HCT116 (cell line): ENCODE measurements at regions of chr1 and their contacts with region 1.

Region 1: GRCh38 chr1:28369371-28370238 is at the start of gene PHACTR4:
- DNase-seq: peak; percentile 92
- ATAC-seq: peak; percentile 92
- H3K4me3 ChIP-seq: peak within 1 kb of the TSS; percentile 87 to 93
- H3K27ac ChIP-seq: peak within 1 kb of the TSS; percentile 92
- H3K4me1 ChIP-seq: peaks cover 52 to 76% of the 10 kb centered on the region in 2 experiments
- H3K27me3 ChIP-seq: no peaks in the 10 kb centered on the region
- CTCF ChIP-seq: no peak
- POLR2A ChIP-seq: peak; percentile 93
- RAD21 ChIP-seq: no peak
- total RNA-seq, gene PHACTR4: 36.0 TPM

Region 2: DNA sequence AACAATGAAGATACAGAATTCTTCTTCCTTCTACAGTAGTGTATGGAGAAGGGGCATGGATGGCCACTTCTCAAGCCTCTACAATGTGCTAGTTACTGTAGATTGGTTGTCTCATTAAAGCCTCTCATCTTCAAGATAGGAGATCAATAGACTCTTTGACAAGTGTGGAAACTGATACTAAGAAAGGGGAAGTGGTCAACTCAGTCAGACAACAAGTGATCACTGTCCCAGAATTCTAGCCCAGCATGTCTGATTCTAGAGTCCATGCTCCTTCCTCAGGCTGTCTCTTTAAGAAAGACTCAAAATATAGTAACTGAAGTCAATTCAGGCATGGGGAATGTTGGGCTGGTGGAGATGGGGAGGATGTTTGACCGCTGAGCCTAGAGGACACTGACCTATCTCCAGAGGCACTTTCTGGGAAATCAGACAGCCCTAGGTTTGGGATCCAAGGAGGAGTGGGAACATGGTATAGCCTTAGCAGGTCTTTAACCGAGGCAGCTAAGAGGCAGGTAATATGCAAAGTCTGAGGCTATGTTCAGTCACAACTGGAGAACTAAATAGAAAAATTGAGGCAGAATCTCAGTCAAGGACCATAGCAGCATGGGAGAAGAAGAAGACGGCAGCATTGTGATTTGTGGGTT is 241.9 kb before region 1 on chr1:
- CTCF ChIA-PET with region 1: no interaction called
- POLR2A ChIA-PET with region 1: no interaction called
- RAD21 ChIA-PET with region 1: no interaction called
- intact Hi-C with region 1: no loop called
- DNase-seq: no peak
- ATAC-seq: no peak
- H3K4me3 ChIP-seq: no peak overlapping the region
- H3K27ac ChIP-seq: no peak overlapping the region
- H3K4me1 ChIP-seq: peaks cover 7 to 34% of the 10 kb centered on the region in 2 experiments
- H3K27me3 ChIP-seq: no peaks in the 10 kb centered on the region
- CTCF ChIP-seq: no peak
- POLR2A ChIP-seq: no peak
- RAD21 ChIP-seq: no peak

Region 3: GRCh38 chr1:28354121-28354520 is 15.5 kb before region 1 on chr1:
- CTCF ChIA-PET with region 1: interaction called, 20 read pairs
- POLR2A ChIA-PET with region 1: interaction called, 14 read pairs
- RAD21 ChIA-PET with region 1: interaction called in 1 of 2 experiments, 3 read pairs
- intact Hi-C with region 1: no loop called
- DNase-seq: no peak
- ATAC-seq: no peak
- H3K4me3 ChIP-seq: no peak overlapping the region
- H3K27ac ChIP-seq: no peak overlapping the region; the same call in 1 of the 2 replicates
- H3K4me1 ChIP-seq: peaks cover 27 to 41% of the 10 kb centered on the region in 2 experiments
- H3K27me3 ChIP-seq: no peaks in the 10 kb centered on the region
- CTCF ChIP-seq: no peak
- POLR2A ChIP-seq: no peak
- RAD21 ChIP-seq: no peak

Region 4: GRCh38 chr1:28648474-28649198 is 279.0 kb after region 1 on chr1 and contains the start of gene RNU11:
- CTCF ChIA-PET with region 1: no interaction called
- POLR2A ChIA-PET with region 1: no interaction called
- RAD21 ChIA-PET with region 1: no interaction called
- intact Hi-C with region 1: no loop called
- DNase-seq: peak; percentile 98
- ATAC-seq: peak; percentile 74
- H3K4me3 ChIP-seq: peak within 1 kb of the TSS; percentile 31 to 51
- H3K27ac ChIP-seq: peak within 1 kb of the TSS; percentile 86
- H3K4me1 ChIP-seq: peaks cover 18 to 36% of the 10 kb centered on the region in 2 experiments
- H3K27me3 ChIP-seq: no peaks in the 10 kb centered on the region
- CTCF ChIP-seq: no peak
- POLR2A ChIP-seq: peak; percentile 100
- RAD21 ChIP-seq: no peak
- total RNA-seq, gene RNU11: not detected